Calu3 (cell line): ENCODE measurements at regions of chr7 and their contacts with region 1.

Region 1: DNA sequence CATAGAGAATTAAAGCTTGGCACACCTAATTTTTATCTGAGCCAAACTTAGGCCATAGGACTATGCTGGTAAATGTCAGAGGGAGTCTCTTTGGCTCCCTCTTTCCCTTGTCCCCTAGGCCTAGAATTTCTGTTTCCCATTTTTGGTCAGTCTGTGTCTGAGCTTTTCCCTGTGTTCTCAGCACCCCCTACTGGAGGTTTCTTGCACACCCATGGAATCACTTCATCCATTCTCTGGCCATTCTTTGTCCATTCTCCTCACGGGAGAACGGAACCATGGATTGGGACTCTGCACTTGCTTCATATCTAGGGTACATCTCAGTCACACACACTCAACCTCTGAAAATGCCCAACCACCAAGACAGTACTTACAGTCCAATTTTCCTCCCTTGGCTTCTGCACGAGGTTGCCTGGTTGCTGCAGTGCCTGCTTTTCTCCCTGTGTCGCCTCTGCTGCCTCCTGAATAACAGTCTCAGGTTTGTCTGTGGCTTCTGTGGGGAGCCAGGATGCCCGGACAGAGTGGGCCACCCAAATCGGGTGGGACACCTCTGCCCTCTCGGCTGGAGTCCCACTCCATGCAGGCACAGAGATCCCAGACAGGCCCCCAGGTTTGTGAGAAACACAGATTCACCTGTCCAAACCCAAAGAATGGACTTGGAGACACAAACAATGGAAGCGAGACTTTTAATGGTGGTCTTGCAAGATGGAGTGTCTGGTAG is 35.1 kb upstream of the DNAH11 start:
- DNase-seq: peak; percentile 80
- H3K4me3 Mint-ChIP-seq: no peak overlapping the region
- H3K27ac Mint-ChIP-seq: no peak overlapping the region
- H3K4me1 Mint-ChIP-seq: peaks cover 20% of the 10 kb centered on the region
- H3K27me3 Mint-ChIP-seq: no peaks in the 10 kb centered on the region
- CTCF ChIP-seq: peak; percentile 87

Region 2: GRCh38 chr7:21365866-21366624 is 141.7 kb before region 1 on chr7:
- CTCF ChIA-PET with region 1: no interaction called
- intact Hi-C with region 1: loop called (anchors 10 kb)
- DNase-seq: peak; percentile 69
- H3K4me3 Mint-ChIP-seq: peak overlapping the region; percentile 6
- H3K27ac Mint-ChIP-seq: peak overlapping the region; percentile 0
- H3K4me1 Mint-ChIP-seq: peaks cover 60% of the 10 kb centered on the region
- H3K27me3 Mint-ChIP-seq: no peaks in the 10 kb centered on the region
- CTCF ChIP-seq: no peak